Colonic mucosa (tissue), 4 donors: ENCODE measurements at regions of chrX and their contacts with region 1.

Region 1: GRCh38 chrX:46376246-46376885 is 168.9 kb downstream of the ZNF674 start:
- DNase-seq: peak; percentile 22
- H3K4me3 ChIP-seq: no peak overlapping the region
- H3K27ac ChIP-seq: no peak overlapping the region
- H3K4me1 ChIP-seq: no peaks in the 10 kb centered on the region
- H3K27me3 ChIP-seq: peaks cover 4% of the 10 kb centered on the region
- CTCF ChIP-seq: peak; percentile 22

Region 2: DNA sequence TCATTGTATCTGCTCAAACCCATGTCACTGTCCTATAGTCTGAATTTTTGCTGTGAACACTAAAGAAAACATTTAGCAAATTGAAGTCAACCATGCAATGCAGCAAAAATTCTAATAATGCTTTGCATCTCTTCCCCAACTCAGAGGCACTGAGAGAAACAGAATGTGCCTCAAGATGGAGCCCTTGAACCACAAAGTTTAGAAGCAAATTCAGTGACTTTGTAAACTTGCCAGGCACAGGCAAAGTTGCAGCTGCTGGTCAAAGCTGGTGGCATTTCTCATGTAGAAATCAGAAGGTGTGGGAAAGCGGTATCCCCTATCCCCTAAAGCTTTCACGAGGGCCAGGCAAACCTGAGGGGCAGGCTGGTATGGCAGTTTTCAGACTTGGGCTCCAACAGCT is 1054.0 kb before region 1 on chrX:
- intact Hi-C with region 1: loop called (anchors 10 kb)
- DNase-seq: peak; percentile 48
- H3K4me3 ChIP-seq: no peak overlapping the region
- H3K27ac ChIP-seq: no peak overlapping the region
- H3K4me1 ChIP-seq: no peaks in the 10 kb centered on the region
- H3K27me3 ChIP-seq: no peaks in the 10 kb centered on the region
- CTCF ChIP-seq: peak; percentile 32

Region 3: GRCh38 chrX:45801554-45801953 is 574.8 kb before region 1 on chrX:
- intact Hi-C with region 1: loop called (anchors 10 kb)
- DNase-seq: no peak
- H3K4me3 ChIP-seq: no peak overlapping the region
- H3K27ac ChIP-seq: no peak overlapping the region
- H3K4me1 ChIP-seq: no peaks in the 10 kb centered on the region
- H3K27me3 ChIP-seq: no peaks in the 10 kb centered on the region
- CTCF ChIP-seq: peak; percentile 22